CD14-positive monocyte (primary cell): ENCODE measurements at regions of chr5 and their contacts with region 1.

Region 1: DNA sequence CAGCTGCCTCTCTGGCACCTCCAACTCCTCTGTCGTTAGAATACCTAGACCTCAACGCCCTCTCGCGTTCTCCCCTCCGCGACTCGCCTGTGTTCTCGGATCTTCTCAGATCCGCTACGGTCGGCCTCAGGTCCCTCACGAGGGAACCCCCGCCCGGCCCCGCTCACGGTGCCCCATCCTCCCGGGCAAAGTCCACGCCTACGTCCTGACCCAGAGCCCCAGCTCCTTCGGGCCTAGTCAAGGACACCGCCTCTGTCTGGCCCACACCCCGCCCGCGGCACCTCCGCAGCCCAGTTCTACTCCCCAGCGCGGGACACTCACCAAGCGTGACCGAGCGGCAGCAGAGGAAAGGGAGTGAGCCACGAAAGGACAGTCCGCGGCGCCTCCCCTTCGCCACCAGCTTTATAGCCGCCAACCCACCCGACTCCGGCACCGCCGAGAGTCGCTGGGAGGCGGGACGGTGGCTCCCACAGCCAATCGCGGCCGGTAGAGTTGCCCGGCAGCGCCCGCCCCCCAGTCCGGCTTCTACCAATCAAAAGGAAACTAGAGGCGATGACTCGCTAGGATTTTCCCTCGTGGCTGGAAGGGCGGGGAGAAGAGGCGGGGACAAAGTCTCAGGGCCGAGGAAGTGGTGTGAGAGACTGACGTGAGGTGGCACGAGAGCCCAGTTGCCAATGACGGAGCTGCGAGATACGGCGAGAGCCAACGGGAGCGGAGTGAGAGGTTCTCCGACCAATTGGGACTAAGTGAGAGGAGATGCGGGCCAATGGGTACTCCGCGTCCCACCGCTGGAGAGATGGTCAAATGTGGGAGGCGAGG is at the start of gene HMGCS1:
- DNase-seq: peak; percentile 97 to 99 (median 99)
- H3K4me3 ChIP-seq: peak within 1 kb of the TSS; percentile 50 to 83 (median 82)
- H3K4me3 Mint-ChIP-seq: peak within 1 kb of the TSS; percentile 95 to 98
- H3K27ac ChIP-seq: peak within 1 kb of the TSS; percentile 85 to 91
- H3K27ac Mint-ChIP-seq: peak within 1 kb of the TSS; percentile 93 to 98 (median 97)
- H3K4me1 ChIP-seq: peaks cover 13 to 18% of the 10 kb centered on the region in 2 donors
- H3K4me1 Mint-ChIP-seq: peaks cover 18% of the 10 kb centered on the region
- H3K27me3 ChIP-seq: no peaks in the 10 kb centered on the region
- H3K27me3 Mint-ChIP-seq: peaks cover 1 to 9% (median 3%) of the 10 kb centered on the region in 3 donors
- CTCF ChIP-seq: no peak
- polyA plus RNA-seq, gene HMGCS1: 6.0 to 10.9 (median 7.8) TPM

Region 2: GRCh38 chr5:41918105-41918504 is 1395.1 kb before region 1 on chr5:
- intact Hi-C with region 1: loop called in 1 of 2 experiments (anchors 10 kb)
- DNase-seq: no peak
- H3K4me3 ChIP-seq: no peak overlapping the region
- H3K4me3 Mint-ChIP-seq: no peak overlapping the region
- H3K27ac ChIP-seq: peak overlapping the region in 1 of 2 donors; percentile 11
- H3K27ac Mint-ChIP-seq: peak overlapping the region in 4 of 7 donors; percentile 14 to 81 (median 60)
- H3K4me1 ChIP-seq: no peaks in the 10 kb centered on the region
- H3K4me1 Mint-ChIP-seq: peaks cover 8% of the 10 kb centered on the region
- H3K27me3 ChIP-seq: no peaks in the 10 kb centered on the region
- H3K27me3 Mint-ChIP-seq: no peaks in the 10 kb centered on the region
- CTCF ChIP-seq: no peak

Region 3: DNA sequence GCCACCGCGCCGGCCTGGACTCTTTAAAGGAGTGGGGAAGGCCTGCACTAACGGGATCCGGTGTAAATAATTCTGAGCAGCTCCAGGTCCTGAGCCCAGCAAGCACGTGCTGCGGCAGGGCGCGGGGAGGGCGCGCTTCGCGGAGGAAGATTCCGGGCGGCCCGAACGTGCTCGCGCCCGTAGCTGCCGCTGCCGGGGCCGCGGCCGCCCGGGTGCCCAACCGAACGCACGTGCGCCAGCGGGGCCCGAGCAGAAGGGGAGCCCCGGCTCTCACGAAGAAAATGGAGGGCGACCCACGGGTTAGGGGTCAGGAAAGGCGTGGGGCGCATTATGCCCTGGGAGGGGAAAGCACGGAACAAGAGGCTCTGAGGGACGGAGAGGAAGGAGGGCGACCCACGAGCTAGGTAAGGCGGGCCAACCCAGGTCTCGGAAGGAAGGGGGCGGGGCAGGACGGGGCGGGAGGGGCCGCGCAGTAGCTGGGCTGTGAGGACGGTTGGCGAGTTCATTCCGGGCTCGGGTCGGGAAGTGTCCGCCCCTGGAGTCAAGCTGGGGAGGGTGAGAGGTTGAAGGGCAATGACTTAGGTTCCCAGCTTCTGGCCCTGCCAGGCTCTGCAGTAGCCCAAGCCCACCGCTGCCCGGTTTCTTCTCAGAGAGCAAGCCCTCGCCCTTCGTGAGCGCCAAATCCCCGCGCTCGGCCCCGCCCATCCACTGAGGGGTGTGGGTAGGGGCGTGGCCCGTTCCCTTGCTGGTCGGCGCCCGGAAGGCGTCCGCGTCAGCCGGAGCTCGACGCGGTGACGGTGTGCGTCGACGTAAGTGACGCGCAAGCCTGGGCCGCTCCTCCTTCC is 192.3 kb before region 1 on chr5 and contains the start of gene ZNF131:
- intact Hi-C with region 1: loop called in 1 of 2 experiments (anchors 2 kb)
- DNase-seq: peak; percentile 95 to 98 (median 96)
- H3K4me3 ChIP-seq: peak within 1 kb of the TSS; percentile 76 to 96 (median 89)
- H3K4me3 Mint-ChIP-seq: peak within 1 kb of the TSS; percentile 94 to 99
- H3K27ac ChIP-seq: peak within 1 kb of the TSS; percentile 95
- H3K27ac Mint-ChIP-seq: peak within 1 kb of the TSS; percentile 96 to 100 (median 98)
- H3K4me1 ChIP-seq: peaks cover 19 to 29% of the 10 kb centered on the region in 2 donors
- H3K4me1 Mint-ChIP-seq: peaks cover 24% of the 10 kb centered on the region
- H3K27me3 ChIP-seq: no peaks in the 10 kb centered on the region
- H3K27me3 Mint-ChIP-seq: peaks cover 0 to 3% (median 0%) of the 10 kb centered on the region in 3 donors
- CTCF ChIP-seq: no peak
- polyA plus RNA-seq, gene ZNF131: 13.4 to 18.8 (median 17.2) TPM

Region 4: GRCh38 chr5:43193181-43193893 is 119.9 kb before region 1 on chr5:
- intact Hi-C with region 1: no loop called
- DNase-seq: peak; percentile 86 to 97 (median 96)
- H3K4me3 ChIP-seq: peak overlapping the region in 2 of 3 experiments; percentile 33 to 64
- H3K4me3 Mint-ChIP-seq: peak overlapping the region; percentile 82 to 90
- H3K27ac ChIP-seq: peak overlapping the region in 1 of 2 donors; percentile 40
- H3K27ac Mint-ChIP-seq: peak overlapping the region; percentile 74 to 89 (median 84)
- H3K4me1 ChIP-seq: peaks cover 24 to 29% of the 10 kb centered on the region in 2 donors
- H3K4me1 Mint-ChIP-seq: peaks cover 28% of the 10 kb centered on the region
- H3K27me3 ChIP-seq: peaks cover 25 to 33% of the 10 kb centered on the region in 2 donors
- H3K27me3 Mint-ChIP-seq: peaks cover 35 to 45% (median 43%) of the 10 kb centered on the region in 3 donors
- CTCF ChIP-seq: no peak

Region 5: GRCh38 chr5:43484106-43484849 is 171.0 kb after region 1 on chr5:
- intact Hi-C with region 1: loop called in 1 of 2 experiments (anchors 10 kb)
- DNase-seq: peak; percentile 75 to 82 (median 79)
- H3K4me3 ChIP-seq: peak overlapping the region; percentile 57 to 83 (median 62)
- H3K4me3 Mint-ChIP-seq: peak overlapping the region; percentile 97 to 98
- H3K27ac ChIP-seq: peak overlapping the region; percentile 89 to 97
- H3K27ac Mint-ChIP-seq: peak overlapping the region; percentile 95 to 100 (median 99)
- H3K4me1 ChIP-seq: peaks cover 17 to 27% of the 10 kb centered on the region in 2 donors
- H3K4me1 Mint-ChIP-seq: peaks cover 27% of the 10 kb centered on the region
- H3K27me3 ChIP-seq: no peaks in the 10 kb centered on the region
- H3K27me3 Mint-ChIP-seq: peaks cover 0 to 2% (median 0%) of the 10 kb centered on the region in 3 donors
- CTCF ChIP-seq: peak; percentile 89